ENCODE measurements at regions of chr22 and their contacts with region 1.

Region 1: DNA sequence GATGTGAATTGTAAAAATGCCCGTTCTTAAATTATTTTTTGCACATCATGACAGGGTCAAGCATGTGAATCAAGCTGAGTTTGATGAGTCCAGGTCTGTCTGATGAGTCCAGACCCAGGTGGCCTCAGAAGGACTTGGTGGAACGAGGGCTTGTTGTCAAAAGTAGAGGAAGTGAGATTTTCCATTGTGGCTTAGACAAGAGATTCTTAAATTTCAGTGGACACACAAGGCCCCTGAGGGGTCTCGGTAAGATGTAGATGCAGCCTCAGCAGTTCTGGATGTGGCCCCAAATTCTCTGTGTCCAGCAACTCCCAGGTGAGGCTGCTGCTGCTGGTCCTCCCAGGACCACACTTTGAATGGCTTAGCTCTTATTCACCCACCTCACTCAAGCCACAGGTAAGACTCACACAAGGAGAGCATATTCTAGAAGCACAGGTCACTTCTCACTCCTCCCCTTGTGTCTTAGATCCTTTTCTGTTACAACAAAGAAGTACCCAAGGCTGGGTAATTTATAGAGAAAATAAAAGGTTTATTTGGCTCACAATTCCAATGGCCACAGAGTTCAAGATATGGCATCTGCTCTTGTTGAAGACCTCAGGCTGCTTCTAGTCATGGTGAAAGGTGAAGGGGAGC is 98.8 kb downstream of the GGTLC2 start:
- DNase-seq: no peak
- ATAC-seq: no peak
- H3K4me3 ChIP-seq: no peak overlapping the region
- H3K27ac ChIP-seq: no peak overlapping the region
- H3K4me1 ChIP-seq: no peaks in the 10 kb centered on the region; the same call in 1 of the 2 replicates
- H3K27me3 ChIP-seq: no peaks in the 10 kb centered on the region
- CTCF ChIP-seq: no peak
- EP300 ChIP-seq: no peak
- POLR2A ChIP-seq: no peak
- RAD21 ChIP-seq: no peak

Region 2: GRCh38 chr22:22720201-22720723 is 23.0 kb before region 1 on chr22:
- CTCF ChIA-PET with region 1: interaction called, 115 read pairs
- POLR2A ChIA-PET with region 1: interaction called, 6 read pairs
- RAD21 ChIA-PET with region 1: interaction called, 32 read pairs
- SMC1A ChIA-PET with region 1: interaction called, 40 read pairs
- in situ Hi-C with region 1: no loop called
- intact Hi-C with region 1: loop called (anchors 1 kb)
- DNase-seq: peak; percentile 57
- ATAC-seq: peak; percentile 84
- H3K4me3 ChIP-seq: no peak overlapping the region
- H3K27ac ChIP-seq: peak overlapping the region; percentile 82
- H3K4me1 ChIP-seq: peaks cover 5% of the 10 kb centered on the region; the same call in 1 of the 2 replicates
- H3K27me3 ChIP-seq: no peaks in the 10 kb centered on the region
- CTCF ChIP-seq: peak; percentile 39 to 48 (median 46); a peak in 5 of 6 replicates
- EP300 ChIP-seq: no peak
- POLR2A ChIP-seq: no peak
- RAD21 ChIP-seq: no peak

Region 3: DNA sequence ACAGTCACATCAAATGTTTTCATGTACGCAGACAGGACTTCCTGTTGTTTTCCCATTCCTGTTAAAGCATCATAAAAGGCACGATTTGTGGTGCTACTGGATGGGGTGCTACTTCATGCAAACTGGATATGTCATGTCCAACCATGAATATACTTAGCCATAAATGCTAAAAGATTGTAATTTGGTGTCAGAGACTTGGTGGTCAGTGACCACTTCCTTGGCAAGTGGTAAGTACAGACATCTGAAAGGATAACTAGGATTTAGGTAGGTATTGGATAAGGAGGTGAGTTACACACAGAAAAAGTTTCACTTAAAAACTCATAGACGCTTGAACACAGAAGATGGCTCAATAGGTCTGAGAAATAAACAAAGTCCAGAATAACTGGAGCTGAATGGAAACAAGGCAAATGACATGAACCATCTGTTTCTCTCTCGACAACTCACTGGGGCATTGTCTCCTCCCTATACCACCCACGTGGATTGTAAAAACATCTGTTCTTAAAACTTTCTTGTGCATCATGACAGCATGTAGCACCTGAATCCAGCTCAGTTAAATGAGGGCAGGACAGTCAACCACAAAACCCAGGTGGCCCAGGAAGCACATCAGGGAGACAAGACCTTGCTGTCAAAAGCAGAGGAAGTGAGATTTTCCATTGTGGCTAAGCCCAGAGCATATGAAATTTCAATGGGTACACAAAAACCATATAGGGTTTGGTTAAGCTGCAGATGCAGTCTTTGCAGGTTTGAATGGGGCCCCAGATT is 122.2 kb after region 1 on chr22:
- CTCF ChIA-PET with region 1: no interaction called
- POLR2A ChIA-PET with region 1: no interaction called
- RAD21 ChIA-PET with region 1: no interaction called
- SMC1A ChIA-PET with region 1: no interaction called
- in situ Hi-C with region 1: no loop called
- intact Hi-C with region 1: no loop called
- DNase-seq: no peak
- ATAC-seq: no peak
- H3K4me3 ChIP-seq: no peak overlapping the region
- H3K27ac ChIP-seq: no peak overlapping the region
- H3K4me1 ChIP-seq: no peaks in the 10 kb centered on the region
- H3K27me3 ChIP-seq: no peaks in the 10 kb centered on the region
- CTCF ChIP-seq: no peak
- EP300 ChIP-seq: no peak
- POLR2A ChIP-seq: no peak
- RAD21 ChIP-seq: no peak

Measured in GM12878 (cell line).